Activated CD4-positive, alpha-beta memory T cell treated with anti-CD3 and anti-CD28 coated beads, Interleukin-2, amount 10 ng/mL, durations not matched to agents 7 days and 5 days (primary cell): ENCODE measurements at regions of chrX and their contacts with region 1.

Region 1: GRCh38 chrX:30577362-30577991 is at the start of gene TASL:
- DNase-seq: peak; percentile 42
- H3K4me3 Mint-ChIP-seq: peak within 1 kb of the TSS; percentile 83
- H3K27ac Mint-ChIP-seq: peak within 1 kb of the TSS; percentile 95
- H3K4me1 Mint-ChIP-seq: peaks cover 18% of the 10 kb centered on the region
- H3K27me3 Mint-ChIP-seq: no peaks in the 10 kb centered on the region
- total RNA-seq, gene TASL: 4.2 to 4.3 TPM

Region 2: DNA sequence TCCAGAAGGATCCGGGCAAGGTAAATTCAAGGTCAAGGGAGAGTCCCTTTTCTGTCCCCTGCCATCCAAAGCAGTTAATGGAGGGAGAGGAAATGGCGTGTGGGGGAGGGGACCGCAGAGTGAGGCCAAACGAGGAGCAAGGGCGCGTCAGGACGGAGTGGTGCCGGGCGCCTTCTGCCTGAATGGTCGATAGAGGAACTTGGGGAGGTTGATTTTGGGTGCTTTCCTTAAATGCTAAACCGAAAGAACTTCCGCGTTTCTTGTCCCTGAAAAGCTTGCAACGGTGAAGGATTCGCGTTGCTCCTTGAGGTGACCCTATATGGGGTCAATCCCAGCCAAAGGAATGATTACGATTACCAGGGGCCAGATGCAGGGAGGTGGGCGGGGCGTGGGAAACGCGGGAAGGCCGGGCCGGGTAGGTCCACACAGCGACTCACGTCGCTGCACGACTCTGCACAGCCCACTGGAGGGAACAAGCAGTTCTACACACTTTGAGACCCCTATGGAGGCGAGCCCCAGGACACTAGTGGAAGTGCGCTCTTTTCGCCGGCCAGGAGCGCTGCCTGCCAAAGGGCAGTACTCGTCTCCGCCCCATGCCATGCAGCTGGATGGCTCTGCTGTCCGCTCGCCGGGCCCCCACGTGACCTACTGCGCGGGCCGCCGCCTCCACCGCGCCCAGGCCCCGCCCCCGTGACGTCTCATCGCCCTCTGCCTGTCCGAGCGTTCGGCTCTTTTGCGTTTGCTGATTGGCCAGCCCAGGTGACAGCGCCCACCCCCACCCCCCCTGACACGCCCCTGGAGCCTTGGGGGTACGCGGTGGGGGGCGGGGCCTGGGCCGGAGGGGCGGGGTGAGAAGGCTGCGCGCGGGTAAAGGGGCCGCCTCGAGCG is 75.3 kb after region 1 on chrX:
- CTCF ChIA-PET with region 1: no interaction called
- POLR2A ChIA-PET with region 1: interaction called, 11 read pairs
- DNase-seq: peak; percentile 93
- H3K4me3 Mint-ChIP-seq: peak overlapping the region; percentile 84
- H3K27ac Mint-ChIP-seq: peak overlapping the region; percentile 96
- H3K4me1 Mint-ChIP-seq: peaks cover 55% of the 10 kb centered on the region
- H3K27me3 Mint-ChIP-seq: no peaks in the 10 kb centered on the region